H1 (cell line): ENCODE measurements at regions of chr12 and their contacts with region 1.

Region 1: DNA sequence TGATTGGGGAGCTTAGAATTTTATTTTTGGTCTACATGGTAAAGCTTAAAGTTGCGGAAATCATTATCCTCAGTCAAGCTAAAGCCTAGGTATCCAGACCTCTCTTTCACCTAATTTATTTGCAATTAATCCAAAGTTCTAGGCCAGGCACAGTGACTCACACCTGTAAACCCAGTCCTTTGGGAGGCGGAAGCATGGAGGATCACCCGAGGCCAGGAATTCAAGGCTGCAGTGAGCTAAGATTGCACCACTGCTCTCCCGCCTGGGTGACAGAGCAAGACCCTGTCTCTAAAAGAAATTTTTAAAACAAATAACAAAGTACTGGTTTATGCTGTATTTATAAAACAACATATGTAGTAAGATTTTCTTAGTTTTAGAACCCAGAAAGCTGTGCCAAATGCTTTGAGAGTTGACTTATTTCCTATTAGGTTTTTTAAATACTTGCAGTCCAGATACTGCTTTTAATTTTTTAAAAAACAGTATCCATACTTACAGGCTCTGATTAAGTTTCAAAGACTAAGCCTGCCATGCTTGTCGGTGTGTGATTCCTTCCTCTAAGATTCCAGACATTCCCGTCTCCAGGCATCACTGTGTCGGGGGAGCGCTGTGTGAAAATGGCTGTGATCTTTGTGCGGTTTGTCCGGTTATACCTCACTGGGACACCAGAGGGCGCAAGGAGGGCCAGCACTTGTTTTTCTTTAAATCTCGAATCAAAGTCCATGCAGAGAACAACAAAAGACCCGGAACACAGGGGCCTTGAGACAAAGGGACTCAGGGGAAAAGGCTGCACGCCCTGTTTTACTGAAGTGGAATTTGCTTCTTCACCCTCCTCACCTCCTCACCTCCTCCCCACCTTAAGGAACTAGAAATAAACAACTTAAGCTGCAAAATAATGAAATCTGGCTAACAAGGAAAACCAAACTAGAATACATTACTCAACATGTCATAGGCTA is 24.6 kb upstream of the TMPO start:
- DNase-seq: peak; percentile 94 to 97
- H3K4me3 ChIP-seq: peak overlapping the region in 1 of 4 experiments; percentile 35; a peak in 2 of 8 replicates
- H3K27ac ChIP-seq: 0 out of 2 replicates have a peak overlapping the region, but pooled peaks have one; percentile 17
- H3K4me1 ChIP-seq: peaks cover 5 to 19% (median 14%) of the 10 kb centered on the region in 4 experiments
- H3K27me3 ChIP-seq: no peaks in the 10 kb centered on the region
- CTCF ChIP-seq: peak; percentile 71 to 96 (median 81)
- EP300 ChIP-seq: peak in 1 of 2 experiments; percentile 76; a peak in 1 of 3 replicates
- POLR2A ChIP-seq: peak in 1 of 2 experiments; percentile 61; a peak in 2 of 3 replicates
- RAD21 ChIP-seq: peak; percentile 62 to 68

Region 2: DNA sequence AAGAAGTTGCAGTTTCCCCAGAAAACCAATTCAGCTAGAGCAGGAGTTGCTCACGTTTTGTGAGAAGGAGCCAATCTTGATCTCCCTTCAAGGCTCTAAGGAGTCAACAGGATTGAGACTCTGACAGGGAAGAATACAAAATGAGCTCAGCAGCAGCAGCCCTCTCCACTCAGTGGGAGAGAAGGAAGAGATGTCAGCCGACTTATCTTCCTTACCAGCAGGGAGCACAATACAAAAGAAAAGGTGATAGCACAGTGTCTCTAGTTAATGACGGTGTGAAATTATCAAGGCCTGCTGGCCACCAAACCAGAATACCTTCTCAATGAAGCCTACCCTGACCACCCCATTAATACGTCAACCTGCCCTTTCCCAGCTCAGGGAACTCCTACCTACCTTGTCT is 198.9 kb before region 1 on chr12:
- CTCF ChIA-PET with region 1: no interaction called
- POLR2A ChIA-PET with region 1: no interaction called
- DNase-seq: no peak
- H3K4me3 ChIP-seq: no peak overlapping the region
- H3K27ac ChIP-seq: no peak overlapping the region
- H3K4me1 ChIP-seq: peaks cover 0 to 3% (median under 1%) of the 10 kb centered on the region in 4 experiments; a peak in 3 of 7 replicates
- H3K27me3 ChIP-seq: no peaks in the 10 kb centered on the region
- CTCF ChIP-seq: peak in 1 of 3 experiments; percentile 10; a peak in 1 of 4 replicates
- EP300 ChIP-seq: no peak
- POLR2A ChIP-seq: no peak
- RAD21 ChIP-seq: no peak

Region 3: DNA sequence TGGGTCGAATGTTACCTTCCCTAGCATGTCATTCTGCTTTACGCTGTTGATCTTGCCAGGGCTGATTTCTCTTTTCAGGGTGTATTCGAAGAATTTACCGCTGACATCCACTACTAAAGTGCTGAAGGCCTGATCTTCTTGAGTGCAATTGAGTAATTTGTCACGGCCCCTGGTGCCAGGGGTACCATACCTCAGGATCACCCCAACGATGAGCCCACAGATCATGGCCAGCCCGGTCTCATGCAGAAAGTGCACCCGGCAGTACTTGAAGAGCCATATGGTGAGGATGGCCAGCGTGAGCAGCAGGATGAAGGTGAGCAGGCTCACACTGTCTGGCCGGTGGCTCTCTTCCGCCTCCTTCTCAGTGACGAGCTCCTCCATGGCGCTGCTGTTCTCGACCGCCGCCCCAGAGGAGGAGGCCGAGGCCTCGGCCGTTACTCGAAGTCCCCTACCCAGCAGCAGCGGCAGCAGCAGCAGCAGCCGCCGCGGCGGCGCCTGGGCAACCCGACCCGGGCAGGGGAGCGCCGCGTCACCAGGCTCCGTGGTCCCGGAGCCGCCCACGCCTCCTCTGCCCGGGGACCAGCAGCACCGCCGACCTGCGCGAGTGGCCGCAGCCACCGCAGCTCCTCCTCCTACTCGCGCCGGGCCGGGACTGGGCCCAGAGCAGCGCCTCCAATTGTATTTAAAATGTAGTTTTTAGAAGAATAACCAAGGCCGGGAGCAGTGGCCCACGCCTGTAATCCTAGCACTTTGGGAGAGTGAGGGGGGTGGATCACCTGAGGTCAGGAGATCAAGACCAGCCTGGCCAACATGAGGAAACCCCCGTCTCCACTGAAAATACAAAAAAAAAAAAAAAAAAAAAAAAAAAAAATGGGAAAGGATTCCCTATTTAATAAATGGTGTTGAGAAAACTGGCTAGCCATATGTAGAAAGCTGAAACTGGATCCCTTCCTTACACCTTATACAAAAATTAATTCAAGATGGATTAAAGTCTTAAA is 33.9 kb before region 1 on chr12:
- CTCF ChIA-PET with region 1: interaction called, 16 read pairs
- POLR2A ChIA-PET with region 1: interaction called, 3 read pairs
- DNase-seq: peak; percentile 46 to 75
- H3K4me3 ChIP-seq: peak overlapping the region; percentile 16 to 58 (median 37); a peak in 7 of 8 replicates
- H3K27ac ChIP-seq: no peak overlapping the region
- H3K4me1 ChIP-seq: peaks cover 3 to 6% (median 4%) of the 10 kb centered on the region in 4 experiments; a peak in 5 of 7 replicates
- H3K27me3 ChIP-seq: peaks cover 0 to 8% (median 5%) of the 10 kb centered on the region in 4 experiments; a peak in 3 of 7 replicates
- CTCF ChIP-seq: 0 out of 4 replicates have a peak, but pooled peaks of 1 of the 3 experiments have one; percentile 7
- EP300 ChIP-seq: peak in 1 of 2 experiments; percentile 61; a peak in 1 of 3 replicates
- POLR2A ChIP-seq: peak in 1 of 2 experiments; percentile 45; a peak in 1 of 3 replicates
- RAD21 ChIP-seq: no peak

Region 4: GRCh38 chr12:98470469-98471082 is 20.2 kb before region 1 on chr12:
- CTCF ChIA-PET with region 1: interaction called, 21 read pairs
- POLR2A ChIA-PET with region 1: no interaction called
- DNase-seq: no peak
- H3K4me3 ChIP-seq: no peak overlapping the region
- H3K27ac ChIP-seq: no peak overlapping the region
- H3K4me1 ChIP-seq: no peaks in the 10 kb centered on the region
- H3K27me3 ChIP-seq: no peaks in the 10 kb centered on the region
- CTCF ChIP-seq: no peak
- EP300 ChIP-seq: no peak
- POLR2A ChIP-seq: no peak
- RAD21 ChIP-seq: no peak

Region 5: DNA sequence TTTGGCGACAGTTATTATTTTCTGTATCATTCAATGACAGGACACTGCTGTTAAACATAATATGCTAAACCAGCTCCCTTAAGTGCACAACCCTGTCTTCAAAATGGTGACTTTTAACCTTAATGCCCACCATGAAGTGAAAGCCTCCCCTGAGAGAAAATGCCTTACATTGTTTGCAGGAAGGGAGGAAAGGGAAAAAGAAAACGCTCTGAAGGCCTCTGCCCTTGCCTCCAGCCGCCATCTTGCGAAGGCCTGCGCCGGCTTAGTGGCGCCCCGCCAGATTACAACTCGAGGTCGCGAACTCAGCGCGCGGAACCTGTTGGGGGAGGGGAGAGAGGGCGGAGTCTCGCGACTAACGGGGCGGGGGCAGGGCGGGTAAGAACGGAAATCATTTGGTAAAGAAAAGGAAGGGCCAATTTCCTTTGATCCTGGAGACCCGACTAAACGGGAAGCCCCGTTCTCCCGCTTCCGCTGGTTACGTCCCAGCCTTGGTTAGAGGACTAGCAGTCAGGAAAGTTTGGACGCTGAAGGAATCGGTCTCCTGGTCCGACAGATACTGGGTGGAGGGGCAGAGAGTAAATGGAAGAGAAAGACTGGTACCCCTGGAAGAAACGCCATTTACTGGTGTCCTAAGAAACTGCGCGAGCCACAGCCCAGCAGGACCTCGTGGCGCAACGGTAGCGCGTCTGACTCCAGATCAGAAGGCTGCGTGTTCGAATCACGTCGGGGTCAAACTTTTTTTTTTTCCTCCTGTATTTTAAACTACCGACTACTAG is 13.0 kb after region 1 on chr12:
- CTCF ChIA-PET with region 1: interaction called, 10 read pairs
- POLR2A ChIA-PET with region 1: interaction called, 20 read pairs
- DNase-seq: peak; percentile 92 to 98
- H3K4me3 ChIP-seq: peak overlapping the region; percentile 69 to 96 (median 87)
- H3K27ac ChIP-seq: peak overlapping the region; percentile 89
- H3K4me1 ChIP-seq: no peaks in the 10 kb centered on the region
- H3K27me3 ChIP-seq: no peaks in the 10 kb centered on the region
- CTCF ChIP-seq: no peak; a peak in 1 of 4 replicates
- EP300 ChIP-seq: peak in 1 of 2 experiments; percentile 70; a peak in 1 of 3 replicates
- POLR2A ChIP-seq: peak in 1 of 2 experiments; percentile 59; a peak in 2 of 3 replicates
- RAD21 ChIP-seq: peak; percentile 7 to 24; a peak in 2 of 4 replicates

Region 6: GRCh38 chr12:98516184-98516873 is 25.6 kb after region 1 on chr12:
- CTCF ChIA-PET with region 1: interaction called, 66 read pairs
- POLR2A ChIA-PET with region 1: interaction called, 30 read pairs
- DNase-seq: peak in 1 of 2 experiments; percentile 79
- H3K4me3 ChIP-seq: peak overlapping the region; percentile 95 to 98 (median 98)
- H3K27ac ChIP-seq: peak overlapping the region; percentile 99
- H3K4me1 ChIP-seq: no peaks in the 10 kb centered on the region; a peak in 2 of 7 replicates
- H3K27me3 ChIP-seq: no peaks in the 10 kb centered on the region
- CTCF ChIP-seq: peak; percentile 27 to 46 (median 42); a peak in 3 of 4 replicates
- EP300 ChIP-seq: no peak
- POLR2A ChIP-seq: peak in 1 of 2 experiments; percentile 70; a peak in 2 of 3 replicates
- RAD21 ChIP-seq: peak; percentile 58 to 63

Region 7: GRCh38 chr12:98532681-98533304 is 42.0 kb after region 1 on chr12:
- CTCF ChIA-PET with region 1: interaction called, 19 read pairs
- POLR2A ChIA-PET with region 1: interaction called, 3 read pairs
- DNase-seq: no peak
- H3K4me3 ChIP-seq: no peak overlapping the region
- H3K27ac ChIP-seq: no peak overlapping the region
- H3K4me1 ChIP-seq: no peaks in the 10 kb centered on the region
- H3K27me3 ChIP-seq: no peaks in the 10 kb centered on the region
- CTCF ChIP-seq: peak in 2 of 3 experiments; percentile 55 to 68; a peak in 3 of 4 replicates
- EP300 ChIP-seq: no peak
- POLR2A ChIP-seq: no peak
- RAD21 ChIP-seq: peak in 1 of 2 experiments; percentile 36; a peak in 2 of 4 replicates

Region 8: GRCh38 chr12:98701166-98701565 is 210.4 kb after region 1 on chr12:
- CTCF ChIA-PET with region 1: no interaction called
- POLR2A ChIA-PET with region 1: no interaction called
- DNase-seq: no peak
- H3K4me3 ChIP-seq: no peak overlapping the region
- H3K27ac ChIP-seq: no peak overlapping the region
- H3K4me1 ChIP-seq: peaks cover 0 to 5% (median 4%) of the 10 kb centered on the region in 4 experiments; a peak in 2 of 7 replicates
- H3K27me3 ChIP-seq: no peaks in the 10 kb centered on the region
- CTCF ChIP-seq: no peak
- EP300 ChIP-seq: no peak
- POLR2A ChIP-seq: no peak
- RAD21 ChIP-seq: no peak